ENCODE measurements at regions of chr15 and their contacts with region 1.

Region 1: DNA sequence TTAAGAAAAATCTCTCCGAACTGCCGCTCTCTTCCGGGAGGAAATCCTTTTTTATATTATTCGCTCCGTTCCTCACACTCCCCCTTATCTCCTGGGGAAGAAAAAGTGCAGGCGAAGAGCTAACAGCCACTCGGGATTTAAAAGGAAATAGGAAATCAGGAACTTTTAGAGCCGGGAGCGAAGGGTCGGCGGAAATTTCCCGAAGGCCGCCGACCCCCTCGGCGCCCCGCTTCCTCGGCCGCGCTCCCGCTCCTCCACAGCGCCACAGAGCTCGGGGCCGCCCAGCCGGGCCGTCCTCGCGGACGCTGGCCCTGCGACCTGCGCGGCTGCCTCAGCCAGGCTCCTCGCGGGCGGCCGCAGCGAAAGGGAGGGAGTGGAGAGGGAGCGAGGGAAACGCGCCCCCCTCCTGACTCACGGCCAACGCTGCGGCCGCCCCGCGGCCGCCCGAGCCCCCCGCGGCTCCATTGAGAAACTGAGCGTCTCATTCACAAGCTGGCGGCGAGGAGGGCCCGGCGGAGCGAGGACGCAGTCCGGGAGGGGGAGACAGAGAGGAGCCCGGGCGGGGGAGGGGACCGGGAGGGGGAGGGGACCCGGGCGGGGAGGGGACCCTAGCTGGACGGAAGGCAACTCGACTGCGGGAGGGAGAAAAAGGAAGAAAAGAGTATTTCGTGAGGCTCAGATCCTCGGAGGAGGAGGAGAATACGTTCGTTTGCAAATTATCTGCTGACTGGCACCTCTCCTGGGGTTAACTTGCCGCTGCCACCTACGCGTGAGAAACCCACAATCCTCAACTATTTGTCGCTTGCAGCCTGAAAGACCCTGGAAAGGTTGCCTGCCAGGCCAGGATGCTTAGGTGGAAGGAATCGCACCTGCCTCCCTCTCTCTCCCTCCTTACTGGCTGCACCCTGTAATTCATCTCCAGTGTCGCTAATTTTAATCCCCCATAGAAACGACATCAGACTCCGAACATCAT is at the start of gene PTPN9:
- DNase-seq: peak; percentile 84
- H3K4me3 Mint-ChIP-seq: peak within 1 kb of the TSS; percentile 91
- H3K27ac Mint-ChIP-seq: peak within 1 kb of the TSS; percentile 93
- H3K4me1 Mint-ChIP-seq: peaks cover 16% of the 10 kb centered on the region
- H3K27me3 Mint-ChIP-seq: no peaks in the 10 kb centered on the region
- total RNA-seq, gene PTPN9: 19.2 to 20.9 TPM

Region 2: DNA sequence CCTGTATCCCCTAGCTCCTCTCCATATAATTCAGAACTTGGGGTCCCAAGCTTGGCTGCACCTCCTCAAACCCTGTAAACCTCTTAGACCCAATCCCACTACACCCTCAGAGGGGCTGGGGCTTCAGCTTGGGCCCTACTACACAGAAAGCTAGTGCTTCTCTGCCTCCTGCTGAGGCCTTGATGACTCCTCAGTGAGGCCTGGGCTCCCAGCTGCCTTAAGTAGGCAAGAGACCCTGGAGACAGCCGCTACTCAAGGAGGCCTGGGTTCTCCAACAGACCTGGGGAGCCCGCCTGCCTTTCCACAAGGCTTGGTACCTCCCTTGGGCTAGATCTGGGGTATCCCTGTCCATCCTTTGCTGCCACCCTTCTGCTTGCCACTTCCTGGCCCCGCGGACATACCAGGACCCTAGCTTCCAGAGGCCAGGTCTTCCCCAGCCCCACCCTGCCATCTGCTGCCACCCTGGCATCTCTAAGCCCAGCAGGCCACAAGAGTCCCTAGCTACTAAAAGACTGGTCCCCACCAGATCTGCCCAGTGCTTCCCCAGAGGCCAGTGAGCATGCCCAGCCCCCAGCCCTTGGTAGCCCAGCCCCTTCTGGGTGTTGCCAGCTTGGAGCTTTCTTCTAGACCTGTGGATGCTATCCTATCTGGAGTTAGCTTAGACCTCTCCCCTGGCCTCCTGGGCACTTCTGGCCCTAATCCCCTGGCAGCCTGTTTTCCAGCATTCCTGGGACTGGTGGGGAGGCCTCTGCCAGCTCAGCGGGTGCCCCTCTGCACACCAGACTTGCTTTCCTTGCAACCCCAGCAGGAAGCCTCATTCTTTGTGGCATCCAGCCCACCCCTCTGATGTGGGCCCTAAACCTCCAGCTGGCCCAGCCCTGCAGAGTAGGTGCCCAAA is 363.9 kb before region 1 on chr15:
- CTCF ChIA-PET with region 1: no interaction called
- POLR2A ChIA-PET with region 1: no interaction called
- intact Hi-C with region 1: no loop called
- DNase-seq: no peak
- H3K4me3 Mint-ChIP-seq: no peak overlapping the region
- H3K27ac Mint-ChIP-seq: no peak overlapping the region
- H3K4me1 Mint-ChIP-seq: no peaks in the 10 kb centered on the region
- H3K27me3 Mint-ChIP-seq: no peaks in the 10 kb centered on the region

Region 3: GRCh38 chr15:75639709-75640482 is 60.7 kb after region 1 on chr15 and contains the start of gene IMP3:
- CTCF ChIA-PET with region 1: interaction called, 11 read pairs
- POLR2A ChIA-PET with region 1: interaction called, 16 read pairs
- intact Hi-C with region 1: loop called (anchors 2 kb)
- DNase-seq: peak; percentile 98
- H3K4me3 Mint-ChIP-seq: peak within 1 kb of the TSS; percentile 86
- H3K27ac Mint-ChIP-seq: peak within 1 kb of the TSS; percentile 86
- H3K4me1 Mint-ChIP-seq: peaks cover 27% of the 10 kb centered on the region
- H3K27me3 Mint-ChIP-seq: no peaks in the 10 kb centered on the region
- total RNA-seq, gene IMP3: 71.7 to 72.4 TPM